ENCODE measurements at regions of chr18 and their contacts with region 1.

Region 1: DNA sequence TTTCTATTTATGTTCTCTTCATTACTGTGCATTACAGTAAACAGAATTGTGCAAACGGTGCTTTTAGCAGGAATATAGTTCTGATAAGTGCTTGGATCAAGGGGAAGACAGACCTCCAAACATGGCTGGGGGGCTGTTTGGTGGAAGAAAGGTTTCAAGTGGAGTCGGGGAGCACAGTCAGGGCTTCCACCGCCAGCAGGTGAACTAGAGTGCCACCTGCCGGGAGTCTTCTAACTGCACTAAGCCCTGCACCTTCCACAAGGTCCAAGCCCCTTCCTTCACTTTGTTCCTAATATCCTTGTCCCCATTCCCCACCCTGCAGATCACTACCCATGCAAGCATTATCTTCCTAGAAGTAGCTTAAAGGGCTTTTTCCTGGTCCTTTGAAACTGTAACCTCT is 11.1 kb downstream of the ONECUT2 start:
- DNase-seq: peak; percentile 50
- H3K4me3 Mint-ChIP-seq: no peak overlapping the region
- H3K27ac Mint-ChIP-seq: no peak overlapping the region
- H3K4me1 Mint-ChIP-seq: peaks cover 4% of the 10 kb centered on the region
- H3K27me3 Mint-ChIP-seq: peaks cover 71% of the 10 kb centered on the region

Region 2: GRCh38 chr18:56702946-56703345 is 743.4 kb before region 1 on chr18:
- CTCF ChIA-PET with region 1: interaction called, 3 read pairs
- intact Hi-C with region 1: loop called (anchors 1 kb)
- DNase-seq: peak; percentile 29
- H3K4me3 Mint-ChIP-seq: no peak overlapping the region
- H3K27ac Mint-ChIP-seq: no peak overlapping the region
- H3K4me1 Mint-ChIP-seq: no peaks in the 10 kb centered on the region
- H3K27me3 Mint-ChIP-seq: no peaks in the 10 kb centered on the region

Region 3: DNA sequence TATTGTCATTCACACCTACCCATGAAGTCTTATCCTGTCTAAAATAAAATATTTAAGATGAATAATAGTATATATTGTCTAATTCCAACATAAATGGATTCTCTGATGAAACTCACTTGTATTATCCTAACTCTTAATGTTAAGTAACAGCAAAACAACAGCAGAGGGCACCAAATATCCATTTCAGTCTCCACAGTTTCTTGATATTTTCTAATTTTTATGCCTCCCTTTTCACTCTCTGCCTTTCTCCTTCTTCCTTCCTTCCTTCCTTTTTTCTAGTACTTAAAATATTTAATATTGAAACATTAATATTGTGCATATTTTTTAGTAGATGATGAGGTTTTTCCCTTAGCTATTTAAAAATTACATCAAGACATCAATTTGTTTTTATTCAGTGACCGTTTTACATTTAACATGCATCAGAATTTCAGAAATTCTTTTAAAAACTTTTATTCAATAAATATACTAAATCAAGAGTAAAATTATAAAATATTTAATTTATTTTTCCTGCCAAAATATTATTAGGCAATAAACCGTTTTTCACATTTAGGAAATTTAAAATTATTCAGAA is 697.5 kb before region 1 on chr18:
- CTCF ChIA-PET with region 1: no interaction called
- intact Hi-C with region 1: loop called (anchors 1 kb)
- DNase-seq: peak; percentile 10
- H3K4me3 Mint-ChIP-seq: no peak overlapping the region
- H3K27ac Mint-ChIP-seq: no peak overlapping the region
- H3K4me1 Mint-ChIP-seq: peaks cover 16% of the 10 kb centered on the region
- H3K27me3 Mint-ChIP-seq: no peaks in the 10 kb centered on the region

Region 4: GRCh38 chr18:56789004-56789888 is 657.1 kb before region 1 on chr18:
- CTCF ChIA-PET with region 1: no interaction called
- intact Hi-C with region 1: loop called (anchors 1 kb)
- DNase-seq: peak; percentile 58
- H3K4me3 Mint-ChIP-seq: no peak overlapping the region
- H3K27ac Mint-ChIP-seq: no peak overlapping the region
- H3K4me1 Mint-ChIP-seq: no peaks in the 10 kb centered on the region
- H3K27me3 Mint-ChIP-seq: no peaks in the 10 kb centered on the region